Activated naive CD4-positive, alpha-beta T cell treated with anti-CD3 and anti-CD28 coated beads for 36 hours (primary cell): ENCODE measurements at regions of chr3 and their contacts with region 1.

Region 1: GRCh38 chr3:24237971-24238767 is 256.5 kb downstream of the THRB start:
- DNase-seq: peak; percentile 40
- H3K4me3 Mint-ChIP-seq: no peak overlapping the region
- H3K27ac Mint-ChIP-seq: no peak overlapping the region
- H3K4me1 Mint-ChIP-seq: no peaks in the 10 kb centered on the region
- H3K27me3 Mint-ChIP-seq: peaks cover 9% of the 10 kb centered on the region

Region 2: DNA sequence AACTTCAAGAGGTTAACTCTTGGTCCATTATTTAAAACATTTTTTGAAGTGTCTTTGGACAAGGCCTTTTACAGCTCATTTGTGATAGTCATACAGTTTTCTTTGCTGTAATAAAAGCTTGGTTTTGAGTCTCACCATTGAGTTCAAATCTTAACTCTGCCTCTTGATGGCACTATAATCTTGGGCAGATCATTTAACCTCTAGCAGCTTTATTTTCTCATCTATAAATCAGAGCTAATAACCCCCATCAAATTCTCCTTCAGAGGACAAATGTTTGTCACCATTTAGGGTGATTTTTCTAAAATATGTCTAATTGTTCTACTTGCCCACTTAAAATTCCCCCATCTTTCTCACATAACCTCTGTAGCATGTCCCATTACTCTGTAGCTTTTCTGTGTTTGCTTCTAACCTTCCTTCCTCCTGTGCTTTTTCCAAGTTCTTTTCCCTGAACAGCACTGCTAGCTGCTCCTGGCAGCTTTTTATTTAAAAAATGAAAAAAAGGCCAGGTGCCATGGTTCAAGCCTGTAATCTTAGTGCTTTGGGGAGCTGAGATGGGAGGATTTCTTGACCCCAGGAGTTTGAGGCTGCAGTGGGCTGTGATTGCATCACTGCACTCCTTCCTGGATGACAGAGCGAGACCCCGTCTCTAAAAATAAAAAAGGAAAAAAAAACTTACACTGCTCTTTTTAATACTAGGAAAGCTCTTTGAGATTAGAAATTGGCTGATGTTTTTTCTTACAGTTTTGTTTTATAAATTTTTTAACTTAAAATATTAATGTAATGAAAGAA is 403.9 kb before region 1 on chr3:
- CTCF ChIA-PET with region 1: no interaction called
- intact Hi-C with region 1: loop called (anchors 1 kb)
- DNase-seq: no peak
- H3K4me3 Mint-ChIP-seq: no peak overlapping the region
- H3K27ac Mint-ChIP-seq: no peak overlapping the region
- H3K4me1 Mint-ChIP-seq: peaks cover 51% of the 10 kb centered on the region
- H3K27me3 Mint-ChIP-seq: no peaks in the 10 kb centered on the region

Region 3: GRCh38 chr3:23999012-23999641 is 239.0 kb before region 1 on chr3:
- CTCF ChIA-PET with region 1: interaction called, 12 read pairs
- intact Hi-C with region 1: loop called (anchors 1 kb)
- DNase-seq: peak; percentile 88
- H3K4me3 Mint-ChIP-seq: no peak overlapping the region
- H3K27ac Mint-ChIP-seq: no peak overlapping the region
- H3K4me1 Mint-ChIP-seq: peaks cover 8% of the 10 kb centered on the region
- H3K27me3 Mint-ChIP-seq: peaks cover 8% of the 10 kb centered on the region

Region 4: DNA sequence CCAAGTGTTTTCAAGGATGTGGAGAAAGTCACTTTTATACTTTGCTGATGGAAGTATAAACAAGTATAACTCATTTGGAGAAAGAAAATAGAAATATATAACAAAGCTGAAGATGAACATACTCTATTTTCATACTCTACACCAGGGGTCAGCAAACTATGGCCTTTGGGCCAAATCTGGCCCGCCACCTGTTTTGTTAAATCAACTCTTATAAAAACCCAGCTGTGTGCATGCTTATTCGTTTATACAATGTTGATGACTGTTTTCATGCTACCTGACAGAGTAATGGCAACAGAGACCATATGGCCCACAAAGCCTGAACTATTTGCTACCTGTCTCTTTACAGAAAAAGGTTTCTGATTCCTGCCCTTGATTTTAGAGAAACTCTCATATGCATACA is 169.1 kb before region 1 on chr3:
- CTCF ChIA-PET with region 1: no interaction called
- intact Hi-C with region 1: loop called (anchors 1 kb)
- DNase-seq: no peak
- H3K4me3 Mint-ChIP-seq: no peak overlapping the region
- H3K27ac Mint-ChIP-seq: no peak overlapping the region
- H3K4me1 Mint-ChIP-seq: no peaks in the 10 kb centered on the region
- H3K27me3 Mint-ChIP-seq: no peaks in the 10 kb centered on the region

Region 5: DNA sequence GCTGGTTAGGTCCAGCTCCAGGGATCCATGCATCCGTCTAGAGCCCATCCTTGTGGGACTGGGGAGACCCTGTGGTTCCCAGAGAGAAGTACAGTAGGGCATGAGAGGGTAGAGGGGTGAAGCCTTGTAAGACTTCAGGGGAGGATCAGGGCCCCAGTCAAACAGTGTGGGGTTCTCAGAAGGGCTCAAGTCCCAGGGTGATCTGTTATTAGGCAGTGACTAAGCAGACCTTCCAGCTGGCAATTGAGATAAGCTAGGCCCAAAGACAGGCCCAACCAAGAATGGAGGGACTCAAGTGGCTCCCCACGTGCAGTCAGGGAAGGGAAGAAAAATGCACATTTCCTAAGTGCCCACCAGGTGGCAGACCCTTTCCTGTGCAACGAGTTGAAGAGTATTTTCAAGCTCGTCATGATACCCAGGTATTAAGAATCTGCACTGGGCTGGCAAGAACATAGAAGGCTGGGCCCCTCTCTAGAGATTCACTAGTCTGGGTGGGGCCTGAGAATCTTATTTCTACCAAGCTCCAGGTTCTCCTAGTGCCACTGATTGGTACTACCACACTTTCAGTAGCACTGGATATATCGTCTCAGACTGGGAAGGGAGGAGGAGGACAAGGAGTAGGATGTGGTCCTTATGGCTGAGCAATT is 52.3 kb before region 1 on chr3:
- CTCF ChIA-PET with region 1: interaction called, 8 read pairs
- intact Hi-C with region 1: loop called (anchors 1 kb)
- DNase-seq: peak; percentile 46
- H3K4me3 Mint-ChIP-seq: no peak overlapping the region
- H3K27ac Mint-ChIP-seq: no peak overlapping the region
- H3K4me1 Mint-ChIP-seq: no peaks in the 10 kb centered on the region
- H3K27me3 Mint-ChIP-seq: peaks cover 2% of the 10 kb centered on the region